ENCODE measurements at regions of chr10 and their contacts with region 1.

Region 1: GRCh38 chr10:109883859-109884771 is 39.2 kb downstream of the XPNPEP1 start:
- DNase-seq: peak; percentile 64
- ATAC-seq: peak; percentile 94
- H3K4me3 ChIP-seq: no peak overlapping the region
- H3K27ac ChIP-seq: no peak overlapping the region; the same call in 1 of the 2 replicates
- H3K4me1 ChIP-seq: peaks cover 4% of the 10 kb centered on the region; the same call in 1 of the 2 replicates
- H3K27me3 ChIP-seq: no peaks in the 10 kb centered on the region
- CTCF ChIP-seq: peak; percentile 98

Region 2: GRCh38 chr10:109894516-109894915 is 10.4 kb after region 1 on chr10:
- CTCF ChIA-PET with region 1: no interaction called
- POLR2A ChIA-PET with region 1: no interaction called
- in situ Hi-C with region 1: no loop called
- intact Hi-C with region 1: no loop called
- DNase-seq: no peak
- ATAC-seq: no peak
- H3K4me3 ChIP-seq: no peak overlapping the region
- H3K27ac ChIP-seq: no peak overlapping the region
- H3K4me1 ChIP-seq: no peaks in the 10 kb centered on the region
- H3K27me3 ChIP-seq: no peaks in the 10 kb centered on the region
- CTCF ChIP-seq: no peak

Region 3: DNA sequence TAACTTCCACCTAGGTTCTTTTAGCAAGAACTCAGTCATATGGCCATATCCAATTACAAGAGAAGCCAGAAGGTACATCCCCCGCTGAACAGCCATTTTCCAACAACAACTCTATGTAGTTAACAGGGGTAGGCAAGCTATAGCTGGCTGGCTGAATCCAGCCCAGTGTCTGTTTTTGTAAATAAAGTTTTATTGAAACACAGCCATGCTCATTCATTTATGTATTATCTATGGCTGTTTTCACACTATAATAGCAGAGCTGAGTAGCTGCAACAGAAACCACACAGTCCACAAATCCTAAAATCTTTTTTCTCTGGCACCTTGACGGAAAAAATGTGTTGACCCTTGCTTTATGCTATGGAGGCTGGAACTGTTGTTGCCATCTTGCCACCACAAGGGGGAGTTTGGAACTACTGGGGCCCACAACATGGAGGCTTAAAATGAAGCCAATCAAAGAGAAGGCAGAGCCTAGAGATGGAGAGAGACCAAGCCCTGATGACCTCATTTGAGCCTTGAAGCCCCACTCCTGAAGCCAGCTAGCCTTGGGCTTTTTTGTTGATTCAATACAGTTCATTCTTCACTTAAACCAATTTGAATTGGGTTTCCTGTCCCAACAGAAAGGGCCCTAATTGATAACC is 72.5 kb after region 1 on chr10:
- CTCF ChIA-PET with region 1: no interaction called
- POLR2A ChIA-PET with region 1: no interaction called
- in situ Hi-C with region 1: no loop called
- intact Hi-C with region 1: no loop called
- DNase-seq: no peak
- ATAC-seq: peak; percentile 91
- H3K4me3 ChIP-seq: no peak overlapping the region
- H3K27ac ChIP-seq: no peak overlapping the region
- H3K4me1 ChIP-seq: no peaks in the 10 kb centered on the region
- H3K27me3 ChIP-seq: no peaks in the 10 kb centered on the region; the same call in none of the 2 replicates
- CTCF ChIP-seq: peak; percentile 83

Region 4: GRCh38 chr10:110007701-110008517 is 123.8 kb after region 1 on chr10 and contains the start of gene ADD3:
- CTCF ChIA-PET with region 1: interaction called, 5 read pairs
- POLR2A ChIA-PET with region 1: no interaction called
- in situ Hi-C with region 1: no loop called
- intact Hi-C with region 1: loop called (anchors 5 kb)
- DNase-seq: no peak
- ATAC-seq: peak; percentile 89
- H3K4me3 ChIP-seq: peak within 1 kb of the TSS; percentile 71 to 73
- H3K27ac ChIP-seq: peak within 1 kb of the TSS; percentile 67
- H3K4me1 ChIP-seq: peaks cover 25% of the 10 kb centered on the region
- H3K27me3 ChIP-seq: no peaks in the 10 kb centered on the region
- CTCF ChIP-seq: no peak
- total RNA-seq, gene ADD3: 32.4 TPM

Region 5: GRCh38 chr10:110123594-110123993 is 239.5 kb after region 1 on chr10:
- CTCF ChIA-PET with region 1: no interaction called
- POLR2A ChIA-PET with region 1: no interaction called
- in situ Hi-C with region 1: no loop called
- intact Hi-C with region 1: no loop called
- DNase-seq: no peak
- ATAC-seq: no peak
- H3K4me3 ChIP-seq: no peak overlapping the region
- H3K27ac ChIP-seq: no peak overlapping the region
- H3K4me1 ChIP-seq: no peaks in the 10 kb centered on the region
- H3K27me3 ChIP-seq: no peaks in the 10 kb centered on the region
- CTCF ChIP-seq: no peak

Region 6: GRCh38 chr10:110137142-110137545 is 253.0 kb after region 1 on chr10:
- CTCF ChIA-PET with region 1: interaction called, 11 read pairs
- POLR2A ChIA-PET with region 1: no interaction called
- in situ Hi-C with region 1: no loop called
- intact Hi-C with region 1: loop called (anchors 2 kb)
- DNase-seq: peak; percentile 59
- ATAC-seq: peak; percentile 84
- H3K4me3 ChIP-seq: no peak overlapping the region
- H3K27ac ChIP-seq: no peak overlapping the region
- H3K4me1 ChIP-seq: no peaks in the 10 kb centered on the region
- H3K27me3 ChIP-seq: no peaks in the 10 kb centered on the region
- CTCF ChIP-seq: peak; percentile 78; the same call in 1 of the 2 replicates

Region 7: GRCh38 chr10:110279407-110279986 is 395.4 kb after region 1 on chr10:
- CTCF ChIA-PET with region 1: interaction called, 3 read pairs
- POLR2A ChIA-PET with region 1: no interaction called
- in situ Hi-C with region 1: no loop called
- intact Hi-C with region 1: loop called (anchors 2 kb)
- DNase-seq: peak; percentile 52
- ATAC-seq: peak; percentile 90
- H3K4me3 ChIP-seq: no peak overlapping the region
- H3K27ac ChIP-seq: no peak overlapping the region
- H3K4me1 ChIP-seq: no peaks in the 10 kb centered on the region
- H3K27me3 ChIP-seq: no peaks in the 10 kb centered on the region
- CTCF ChIP-seq: peak; percentile 80